GM12878 (cell line): ENCODE measurements at regions of chr20 and their contacts with region 1.

Region 1: DNA sequence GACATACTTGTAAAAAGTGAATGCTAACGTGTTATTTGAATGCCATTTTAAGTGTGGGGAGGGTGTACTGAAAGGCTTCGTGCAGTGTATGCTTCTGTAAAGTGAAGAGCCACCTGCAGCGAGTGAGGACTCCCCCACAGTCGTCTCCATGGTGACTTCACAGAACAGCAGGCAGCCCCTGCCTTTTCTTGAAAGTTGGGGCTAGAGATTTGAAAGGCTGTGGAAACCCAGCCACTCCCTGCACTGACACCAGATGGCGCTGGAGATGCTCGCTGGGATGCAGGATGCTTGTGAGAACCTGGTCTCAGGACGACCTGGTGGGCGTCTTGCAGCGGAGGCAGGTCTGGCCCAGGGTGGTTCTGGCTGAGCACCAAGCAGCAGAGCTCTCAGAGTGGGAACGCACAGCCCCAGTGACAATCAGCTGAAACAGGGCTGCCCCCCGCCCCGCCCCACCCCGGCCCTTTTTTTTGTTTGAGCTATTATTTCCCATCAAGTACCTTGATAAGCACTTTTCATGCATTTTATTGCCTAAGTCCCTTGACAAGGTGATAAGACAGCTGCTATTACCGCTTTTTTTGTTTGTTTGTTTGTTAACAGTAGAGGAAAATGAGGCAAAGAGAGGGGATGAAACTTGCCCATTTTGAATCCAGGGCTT is 150.3 kb downstream of the SYCP2 start:
- DNase-seq: no peak
- ATAC-seq: peak; percentile 89
- H3K4me3 ChIP-seq: no peak overlapping the region
- H3K27ac ChIP-seq: no peak overlapping the region
- H3K4me1 ChIP-seq: no peaks in the 10 kb centered on the region
- H3K27me3 ChIP-seq: no peaks in the 10 kb centered on the region
- CTCF ChIP-seq: peak; percentile 81 to 96 (median 95)
- EP300 ChIP-seq: no peak
- POLR2A ChIP-seq: no peak
- RAD21 ChIP-seq: peak; percentile 86

Region 2: GRCh38 chr20:59682603-59683002 is 100.5 kb before region 1 on chr20:
- CTCF ChIA-PET with region 1: no interaction called
- POLR2A ChIA-PET with region 1: no interaction called
- RAD21 ChIA-PET with region 1: no interaction called
- SMC1A ChIA-PET with region 1: no interaction called
- in situ Hi-C with region 1: no loop called
- intact Hi-C with region 1: no loop called
- DNase-seq: no peak
- ATAC-seq: no peak
- H3K4me3 ChIP-seq: no peak overlapping the region
- H3K27ac ChIP-seq: no peak overlapping the region
- H3K4me1 ChIP-seq: no peaks in the 10 kb centered on the region
- H3K27me3 ChIP-seq: no peaks in the 10 kb centered on the region; a peak in 1 of 4 replicates
- CTCF ChIP-seq: no peak
- EP300 ChIP-seq: no peak
- POLR2A ChIP-seq: no peak
- RAD21 ChIP-seq: no peak

Region 3: DNA sequence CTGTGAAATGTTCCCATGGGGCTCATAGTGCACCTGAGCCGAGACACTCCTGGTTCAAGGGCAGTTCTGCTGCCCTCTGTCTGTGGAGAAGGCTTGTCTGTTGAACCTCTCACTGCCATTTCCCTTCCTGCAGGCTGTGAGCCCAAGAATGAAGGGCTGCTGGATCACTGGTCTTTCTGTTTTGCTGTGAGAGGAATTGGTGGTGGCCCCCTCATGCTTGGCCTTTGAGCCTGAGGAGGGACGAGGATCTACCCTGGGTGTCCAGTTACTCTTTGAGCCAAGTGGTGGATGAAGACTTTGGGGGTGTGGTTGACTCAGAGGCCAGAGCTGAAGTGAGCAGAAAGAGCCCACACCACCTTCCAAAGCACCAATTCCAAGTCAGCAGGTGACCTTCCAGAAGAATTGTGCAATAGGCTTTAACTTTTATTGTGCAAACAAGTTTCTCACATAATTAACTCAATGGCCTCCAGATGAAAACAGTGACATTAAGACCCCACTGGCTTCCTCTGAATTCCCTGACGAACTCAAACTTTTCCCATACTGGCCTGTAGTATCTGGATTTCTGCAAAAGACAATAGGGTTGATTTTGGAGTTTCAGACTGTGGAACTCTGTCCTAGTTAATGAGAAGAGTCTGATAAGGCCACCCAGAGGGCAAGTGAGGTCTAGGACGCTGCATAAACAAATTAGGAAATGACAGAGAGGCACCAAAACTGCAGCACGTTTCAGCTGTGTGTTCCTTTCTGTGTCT is 77.3 kb before region 1 on chr20:
- CTCF ChIA-PET with region 1: no interaction called
- POLR2A ChIA-PET with region 1: no interaction called
- RAD21 ChIA-PET with region 1: no interaction called
- SMC1A ChIA-PET with region 1: no interaction called
- in situ Hi-C with region 1: no loop called
- intact Hi-C with region 1: no loop called
- DNase-seq: no peak
- ATAC-seq: no peak
- H3K4me3 ChIP-seq: no peak overlapping the region
- H3K27ac ChIP-seq: no peak overlapping the region
- H3K4me1 ChIP-seq: no peaks in the 10 kb centered on the region
- H3K27me3 ChIP-seq: no peaks in the 10 kb centered on the region
- CTCF ChIP-seq: peak in 1 of 3 experiments; percentile 8; a peak in 1 of 6 replicates
- EP300 ChIP-seq: no peak
- POLR2A ChIP-seq: no peak
- RAD21 ChIP-seq: no peak

Region 4: GRCh38 chr20:59820204-59821041 is 37.3 kb after region 1 on chr20:
- CTCF ChIA-PET with region 1: no interaction called
- POLR2A ChIA-PET with region 1: no interaction called
- RAD21 ChIA-PET with region 1: no interaction called
- SMC1A ChIA-PET with region 1: no interaction called
- in situ Hi-C with region 1: no loop called
- intact Hi-C with region 1: loop called (anchors 2 kb)
- DNase-seq: no peak
- ATAC-seq: peak; percentile 72
- H3K4me3 ChIP-seq: no peak overlapping the region
- H3K27ac ChIP-seq: no peak overlapping the region
- H3K4me1 ChIP-seq: no peaks in the 10 kb centered on the region
- H3K27me3 ChIP-seq: no peaks in the 10 kb centered on the region
- CTCF ChIP-seq: no peak
- EP300 ChIP-seq: no peak
- POLR2A ChIP-seq: no peak
- RAD21 ChIP-seq: no peak

Region 5: DNA sequence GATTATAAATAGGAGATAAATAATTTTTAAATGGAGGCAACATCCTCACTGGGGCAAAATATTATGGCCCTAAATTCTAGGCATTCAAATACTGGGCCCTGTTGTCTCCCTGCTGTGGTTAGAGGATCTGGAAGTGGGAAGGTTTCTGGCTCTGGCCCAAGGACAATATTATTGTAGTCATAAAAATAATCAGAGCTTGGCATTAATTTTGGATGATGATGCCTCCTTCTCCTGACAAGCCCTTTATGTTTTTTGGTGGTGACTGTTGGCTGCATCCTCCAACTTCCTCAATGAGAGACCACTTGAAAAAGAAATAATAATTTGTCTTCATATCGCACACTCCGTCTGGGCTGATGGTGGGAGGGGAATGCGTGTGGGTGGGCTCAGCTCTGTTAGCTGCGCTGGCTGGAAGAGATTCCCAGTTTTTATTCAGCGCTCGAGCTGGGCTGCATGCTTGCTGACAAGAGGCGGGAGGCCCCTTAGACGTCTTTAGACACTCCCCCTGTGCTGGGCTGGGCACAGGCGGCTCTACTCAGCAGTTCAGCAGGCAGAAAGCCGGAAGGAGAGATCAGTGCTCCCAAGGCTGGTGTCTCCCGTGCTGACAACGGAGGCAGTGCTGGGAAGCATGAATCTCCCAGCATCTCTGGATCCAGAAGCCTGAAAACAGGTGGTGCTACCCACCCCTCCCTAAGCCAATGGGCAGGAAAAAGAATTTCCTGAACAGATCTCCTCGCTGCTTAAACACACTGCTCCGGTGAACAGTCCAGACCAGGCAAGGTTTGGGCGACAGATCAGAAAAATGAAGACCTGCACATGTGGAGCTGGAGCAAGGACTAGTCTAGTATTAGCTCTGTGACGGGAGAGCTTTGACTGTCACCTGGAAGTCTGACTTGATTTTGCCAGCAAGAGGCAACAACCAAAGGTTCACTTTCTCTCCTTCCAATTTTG is 52.6 kb after region 1 on chr20:
- CTCF ChIA-PET with region 1: interaction called, 5 read pairs
- POLR2A ChIA-PET with region 1: no interaction called
- RAD21 ChIA-PET with region 1: interaction called, 4 read pairs
- SMC1A ChIA-PET with region 1: interaction called, 10 read pairs
- in situ Hi-C with region 1: no loop called
- intact Hi-C with region 1: no loop called
- DNase-seq: no peak
- ATAC-seq: peak; percentile 71
- H3K4me3 ChIP-seq: no peak overlapping the region
- H3K27ac ChIP-seq: no peak overlapping the region
- H3K4me1 ChIP-seq: peaks cover 17% of the 10 kb centered on the region
- H3K27me3 ChIP-seq: no peaks in the 10 kb centered on the region; a peak in 1 of 4 replicates
- CTCF ChIP-seq: no peak
- EP300 ChIP-seq: no peak
- POLR2A ChIP-seq: no peak
- RAD21 ChIP-seq: no peak

Region 6: DNA sequence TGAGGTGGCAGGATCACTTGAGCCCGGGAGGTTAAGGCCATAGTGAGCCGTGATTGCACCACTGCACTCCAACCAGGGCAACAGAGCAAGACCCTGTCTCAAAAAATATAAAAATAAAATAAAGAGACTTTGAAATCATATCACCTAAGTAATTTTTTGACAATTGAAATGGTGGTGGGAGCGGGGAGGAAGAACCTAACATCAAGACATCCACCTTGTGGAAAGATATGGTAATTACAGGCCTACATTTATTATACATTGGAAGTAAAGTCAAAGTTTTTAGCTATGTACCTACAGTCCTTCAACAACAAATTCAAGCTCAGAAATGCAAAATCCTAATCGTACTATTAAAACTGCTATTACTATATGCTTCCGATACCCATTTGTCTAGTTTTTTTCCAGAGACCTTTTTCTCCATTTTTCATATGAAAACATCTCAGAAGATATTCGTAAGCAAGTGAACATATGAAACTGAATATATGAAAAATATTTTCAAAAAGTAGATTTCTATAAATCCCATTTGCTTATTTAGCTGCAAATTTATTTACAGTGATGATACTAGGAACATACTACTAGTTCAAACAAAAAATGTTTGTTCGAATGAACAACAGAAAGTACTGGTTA is 67.0 kb after region 1 on chr20:
- CTCF ChIA-PET with region 1: interaction called, 174 read pairs
- POLR2A ChIA-PET with region 1: interaction called, 4 read pairs
- RAD21 ChIA-PET with region 1: interaction called, 74 read pairs
- SMC1A ChIA-PET with region 1: interaction called, 32 read pairs
- in situ Hi-C with region 1: no loop called
- intact Hi-C with region 1: loop called (anchors 1 kb)
- DNase-seq: peak; percentile 9
- ATAC-seq: peak; percentile 67
- H3K4me3 ChIP-seq: no peak overlapping the region
- H3K27ac ChIP-seq: no peak overlapping the region
- H3K4me1 ChIP-seq: no peaks in the 10 kb centered on the region
- H3K27me3 ChIP-seq: no peaks in the 10 kb centered on the region
- CTCF ChIP-seq: peak; percentile 50 to 59 (median 56); a peak in 5 of 6 replicates
- EP300 ChIP-seq: no peak
- POLR2A ChIP-seq: no peak
- RAD21 ChIP-seq: peak; percentile 61

Region 7: GRCh38 chr20:61328911-61329558 is 1545.9 kb after region 1 on chr20:
- CTCF ChIA-PET with region 1: no interaction called
- POLR2A ChIA-PET with region 1: no interaction called
- RAD21 ChIA-PET with region 1: no interaction called
- SMC1A ChIA-PET with region 1: no interaction called
- in situ Hi-C with region 1: loop called (anchors 25 kb)
- intact Hi-C with region 1: no loop called
- DNase-seq: no peak
- ATAC-seq: no peak
- H3K4me3 ChIP-seq: no peak overlapping the region
- H3K27ac ChIP-seq: no peak overlapping the region
- H3K4me1 ChIP-seq: no peaks in the 10 kb centered on the region
- H3K27me3 ChIP-seq: no peaks in the 10 kb centered on the region
- CTCF ChIP-seq: no peak
- EP300 ChIP-seq: no peak
- POLR2A ChIP-seq: no peak
- RAD21 ChIP-seq: no peak